Activated naive CD4-positive, alpha-beta T cell treated with anti-CD3 and anti-CD28 coated beads for 36 hours (primary cell): ENCODE measurements at regions of chr6 and their contacts with region 1.

Region 1: DNA sequence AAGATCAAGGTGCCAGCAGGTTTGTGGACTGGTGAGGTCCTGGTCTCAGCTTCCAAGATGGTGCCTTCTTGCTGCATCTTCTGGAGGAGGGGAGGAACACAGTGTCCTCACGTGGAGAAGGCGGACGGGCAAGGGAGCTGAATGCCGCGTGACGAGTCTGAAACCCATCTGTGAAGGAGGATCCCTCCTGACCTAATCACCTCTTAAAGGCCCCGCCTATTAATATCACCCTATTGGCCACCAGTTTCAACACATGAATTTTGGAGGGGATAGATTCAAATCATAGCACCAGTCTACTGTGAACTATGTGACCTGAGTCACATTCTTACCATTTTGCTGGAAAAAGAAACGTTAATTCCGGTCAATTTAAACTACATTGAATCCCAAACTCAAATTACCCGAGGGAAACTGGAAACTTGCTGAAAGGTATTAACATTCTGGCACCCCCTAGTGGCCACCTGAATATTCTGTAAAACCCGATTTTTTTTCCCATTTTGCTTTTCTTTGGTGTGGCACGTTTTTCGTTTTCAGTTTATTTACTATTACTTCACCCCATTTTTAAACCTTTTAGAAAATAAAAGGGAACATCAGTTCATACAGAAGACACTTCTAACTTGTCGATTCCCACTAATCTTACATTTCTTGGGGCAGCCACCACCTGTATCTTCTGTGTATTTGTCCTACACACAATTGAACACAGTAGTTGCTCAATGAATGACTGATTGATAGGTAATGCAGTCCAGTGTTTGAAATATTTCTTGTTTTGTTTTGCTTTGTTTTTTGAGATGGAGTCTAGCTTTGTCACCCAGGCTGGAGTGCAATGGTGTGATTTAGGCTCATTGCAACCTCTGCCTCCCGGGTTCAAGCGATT is 17.9 kb upstream of the CCDC170 start:
- DNase-seq: peak; percentile 64
- H3K4me3 Mint-ChIP-seq: no peak overlapping the region
- H3K27ac Mint-ChIP-seq: no peak overlapping the region
- H3K4me1 Mint-ChIP-seq: peaks cover 6% of the 10 kb centered on the region
- H3K27me3 Mint-ChIP-seq: no peaks in the 10 kb centered on the region

Region 2: DNA sequence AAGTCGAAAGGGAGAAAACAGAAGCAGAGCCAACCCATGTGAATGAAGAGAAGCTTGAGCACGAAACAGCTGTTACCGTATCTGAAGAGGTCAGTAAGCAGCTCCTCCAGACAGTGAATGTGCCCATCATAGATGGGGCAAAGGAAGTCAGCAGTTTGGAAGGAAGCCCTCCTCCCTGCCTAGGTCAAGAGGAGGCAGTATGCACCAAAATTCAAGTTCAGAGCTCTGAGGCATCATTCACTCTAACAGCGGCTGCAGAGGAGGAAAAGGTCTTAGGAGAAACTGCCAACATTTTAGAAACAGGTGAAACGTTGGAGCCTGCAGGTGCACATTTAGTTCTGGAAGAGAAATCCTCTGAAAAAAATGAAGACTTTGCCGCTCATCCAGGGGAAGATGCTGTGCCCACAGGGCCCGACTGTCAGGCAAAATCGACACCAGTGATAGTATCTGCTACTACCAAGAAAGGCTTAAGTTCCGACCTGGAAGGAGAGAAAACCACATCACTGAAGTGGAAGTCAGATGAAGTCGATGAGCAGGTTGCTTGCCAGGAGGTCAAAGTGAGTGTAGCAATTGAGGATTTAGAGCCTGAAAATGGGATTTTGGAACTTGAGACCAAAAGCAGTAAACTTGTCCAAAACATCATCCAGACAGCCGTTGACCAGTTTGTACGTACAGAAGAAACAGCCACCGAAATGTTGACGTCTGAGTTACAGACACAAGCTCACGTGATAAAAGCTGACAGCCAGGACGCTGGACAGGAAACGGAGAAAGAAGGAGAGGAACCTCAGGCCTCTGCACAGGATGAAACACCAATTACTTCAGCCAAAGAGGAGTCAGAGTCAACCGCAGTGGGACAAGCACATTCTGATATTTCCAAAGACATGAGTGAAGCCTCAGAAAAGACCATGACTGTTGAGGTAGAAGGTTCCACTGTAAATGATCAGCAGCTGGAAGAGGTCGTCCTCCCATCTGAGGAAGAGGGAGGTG is 123.2 kb before region 1 on chr6:
- CTCF ChIA-PET with region 1: no interaction called
- intact Hi-C with region 1: loop called (anchors 1 kb)
- DNase-seq: no peak
- H3K4me3 Mint-ChIP-seq: no peak overlapping the region
- H3K27ac Mint-ChIP-seq: no peak overlapping the region
- H3K4me1 Mint-ChIP-seq: peaks cover under 1% of the 10 kb centered on the region
- H3K27me3 Mint-ChIP-seq: no peaks in the 10 kb centered on the region

Region 3: GRCh38 chr6:151409260-151409659 is 66.6 kb before region 1 on chr6:
- CTCF ChIA-PET with region 1: no interaction called
- intact Hi-C with region 1: loop called (anchors 1 kb)
- DNase-seq: no peak
- H3K4me3 Mint-ChIP-seq: no peak overlapping the region
- H3K27ac Mint-ChIP-seq: no peak overlapping the region
- H3K4me1 Mint-ChIP-seq: peaks cover 15% of the 10 kb centered on the region
- H3K27me3 Mint-ChIP-seq: no peaks in the 10 kb centered on the region

Region 4: DNA sequence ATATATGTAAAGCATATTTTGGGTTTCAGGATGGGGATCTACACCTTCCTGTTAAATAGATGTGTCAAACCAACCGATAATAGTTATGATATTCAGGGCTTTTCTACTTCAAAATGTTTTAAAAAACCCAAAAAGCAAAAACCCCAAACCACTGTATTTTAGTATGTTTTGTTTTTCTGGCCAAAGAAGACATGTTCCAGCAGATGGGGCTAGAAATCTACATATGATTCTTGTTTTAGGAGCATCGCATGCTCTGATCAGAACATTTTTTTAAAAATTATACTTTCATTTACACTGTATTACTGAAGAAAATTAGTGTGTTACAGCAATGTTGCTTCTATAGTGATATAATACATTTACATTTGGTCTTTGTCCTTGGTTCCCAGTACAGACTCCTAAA is 35.0 kb before region 1 on chr6:
- CTCF ChIA-PET with region 1: interaction called, 5 read pairs
- intact Hi-C with region 1: loop called (anchors 1 kb)
- DNase-seq: no peak
- H3K4me3 Mint-ChIP-seq: no peak overlapping the region
- H3K27ac Mint-ChIP-seq: no peak overlapping the region
- H3K4me1 Mint-ChIP-seq: peaks cover 38% of the 10 kb centered on the region
- H3K27me3 Mint-ChIP-seq: no peaks in the 10 kb centered on the region

Region 5: DNA sequence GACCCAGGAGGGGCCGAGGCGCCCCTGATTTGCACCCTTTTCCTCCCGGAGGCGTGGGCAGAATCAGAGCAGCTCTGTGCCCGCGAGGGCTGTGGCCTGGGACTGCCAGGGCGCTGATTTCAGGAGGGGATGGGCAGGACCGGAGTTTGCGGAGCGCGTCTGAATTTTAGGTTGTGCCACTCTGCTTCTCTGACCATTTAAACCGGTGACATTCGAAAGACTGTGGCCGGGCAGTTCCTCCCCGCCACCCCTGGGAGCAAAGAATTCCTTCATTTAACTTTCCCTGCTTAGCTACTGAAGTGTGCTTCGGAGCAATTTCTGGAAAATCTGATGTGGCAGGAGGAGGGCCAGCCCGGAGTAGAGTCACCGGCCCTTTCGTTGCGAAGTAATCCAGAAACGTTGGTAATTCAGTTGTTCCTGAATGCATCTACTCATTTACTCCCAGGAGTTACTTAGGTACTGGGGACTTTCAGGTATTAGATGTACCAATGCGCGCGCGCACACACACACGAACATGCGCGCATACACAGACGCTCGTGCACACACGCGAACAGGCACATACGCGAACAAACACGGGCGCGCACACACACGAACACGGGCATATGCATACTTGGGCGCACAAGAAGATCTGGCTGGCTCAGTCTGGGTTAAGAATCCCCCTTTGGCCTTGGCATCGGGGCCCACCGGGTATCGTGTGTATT is 18.5 kb after region 1 on chr6:
- CTCF ChIA-PET with region 1: no interaction called
- intact Hi-C with region 1: no loop called
- DNase-seq: peak; percentile 44
- H3K4me3 Mint-ChIP-seq: peak overlapping the region; percentile 70
- H3K27ac Mint-ChIP-seq: no peak overlapping the region
- H3K4me1 Mint-ChIP-seq: peaks cover 17% of the 10 kb centered on the region
- H3K27me3 Mint-ChIP-seq: peaks cover 37% of the 10 kb centered on the region